IMR-90 (cell line): ENCODE measurements at regions of chr18 and their contacts with region 1.

Region 1: GRCh38 chr18:3093624-3094337 is 80.8 kb upstream of the LPIN2 start:
- DNase-seq: no peak
- ATAC-seq: no peak
- H3K4me3 ChIP-seq: no peak overlapping the region
- H3K27ac ChIP-seq: no peak overlapping the region
- H3K4me1 ChIP-seq: peaks cover 2% of the 10 kb centered on the region; the same call in 1 of the 2 replicates
- H3K27me3 ChIP-seq: peaks cover under 1% of the 10 kb centered on the region
- CTCF ChIP-seq: no peak
- POLR2A ChIP-seq: no peak
- RAD21 ChIP-seq: no peak

Region 2: DNA sequence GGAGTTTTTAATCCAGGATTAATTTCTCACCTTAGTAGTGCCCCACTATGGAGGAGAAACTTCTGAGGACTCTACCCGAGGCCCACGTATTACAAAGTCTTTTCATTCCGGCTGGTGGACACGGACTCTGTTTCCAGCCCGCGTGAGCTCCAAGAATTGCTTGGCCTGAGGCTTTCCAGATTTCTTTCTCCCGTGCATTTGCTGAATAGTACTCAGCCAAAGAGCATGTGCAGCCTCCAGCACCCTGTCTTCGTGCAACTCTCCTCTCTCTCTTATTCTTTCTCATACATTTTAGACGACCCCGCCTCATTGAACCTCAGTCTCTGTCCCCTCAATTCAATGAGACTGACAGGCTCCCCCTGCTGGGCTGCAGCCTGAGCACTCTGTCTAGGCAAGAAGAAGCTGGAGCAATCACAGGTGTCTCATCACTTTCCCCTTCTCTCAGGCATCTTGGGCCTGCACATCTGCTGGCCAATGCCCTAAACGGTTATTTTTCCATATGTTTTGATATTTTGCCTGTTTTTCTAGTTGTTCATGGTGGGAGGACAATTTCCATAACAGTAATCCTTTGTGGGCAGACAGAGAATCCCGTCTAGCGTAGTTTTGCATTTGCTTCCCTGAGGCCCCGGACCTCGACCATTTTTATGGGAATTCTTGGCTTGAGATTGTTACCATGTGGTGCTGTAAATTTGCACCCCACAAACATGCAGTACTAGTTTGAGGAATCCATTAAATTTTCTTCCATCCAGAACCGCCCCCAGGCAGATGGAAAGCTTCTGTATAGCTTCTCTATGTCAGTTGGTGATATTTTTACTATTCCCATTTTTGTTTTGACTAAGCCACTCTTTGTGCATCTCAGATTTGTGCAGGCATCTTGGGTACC is 30.7 kb before region 1 on chr18:
- CTCF ChIA-PET with region 1: interaction called, 3 read pairs
- POLR2A ChIA-PET with region 1: no interaction called
- dilution Hi-C with region 1: no loop called
- in situ Hi-C with region 1: no loop called
- intact Hi-C with region 1: loop called (anchors 5 kb)
- DNase-seq: peak; percentile 15
- ATAC-seq: peak; percentile 70
- H3K4me3 ChIP-seq: no peak overlapping the region
- H3K27ac ChIP-seq: no peak overlapping the region
- H3K4me1 ChIP-seq: peaks cover 7% of the 10 kb centered on the region; the same call in 1 of the 2 replicates
- H3K27me3 ChIP-seq: no peaks in the 10 kb centered on the region
- CTCF ChIP-seq: peak; percentile 53
- POLR2A ChIP-seq: no peak
- RAD21 ChIP-seq: peak; percentile 46

Region 3: GRCh38 chr18:3129053-3129864 is 35.5 kb after region 1 on chr18:
- CTCF ChIA-PET with region 1: interaction called, 3 read pairs
- POLR2A ChIA-PET with region 1: no interaction called
- dilution Hi-C with region 1: no loop called
- in situ Hi-C with region 1: no loop called
- intact Hi-C with region 1: loop called (anchors 1 kb)
- DNase-seq: peak; percentile 78
- ATAC-seq: peak; percentile 100
- H3K4me3 ChIP-seq: no peak overlapping the region
- H3K27ac ChIP-seq: no peak overlapping the region
- H3K4me1 ChIP-seq: no peaks in the 10 kb centered on the region
- H3K27me3 ChIP-seq: no peaks in the 10 kb centered on the region; the same call in 1 of the 2 replicates
- CTCF ChIP-seq: peak; percentile 83
- POLR2A ChIP-seq: no peak
- RAD21 ChIP-seq: peak; percentile 68